AG04449 (cell line): ENCODE measurements at regions of chr11 and their contacts with region 1.

Region 1: DNA sequence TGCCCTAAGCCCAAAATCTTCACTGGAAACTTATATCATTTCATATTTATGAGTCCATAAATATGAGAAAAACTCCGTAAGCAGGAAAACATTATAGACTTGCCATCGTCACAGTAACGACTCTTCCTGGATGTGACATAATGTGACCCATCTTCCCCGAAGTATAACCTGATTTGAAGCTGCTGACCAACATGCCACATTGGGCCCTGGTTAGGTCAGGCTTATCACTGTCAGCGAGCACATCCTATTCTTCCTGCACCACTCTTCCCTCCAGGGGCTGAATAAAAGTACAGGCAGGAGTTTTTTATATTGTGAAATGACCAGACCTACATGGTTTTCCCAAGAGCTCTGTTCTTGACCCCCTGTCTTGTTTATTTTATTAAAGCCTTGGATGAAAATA is 12.1 kb upstream of the BLID start:
- DNase-seq: no peak
- H3K4me3 ChIP-seq: no peak overlapping the region
- CTCF ChIP-seq: no peak

Region 2: DNA sequence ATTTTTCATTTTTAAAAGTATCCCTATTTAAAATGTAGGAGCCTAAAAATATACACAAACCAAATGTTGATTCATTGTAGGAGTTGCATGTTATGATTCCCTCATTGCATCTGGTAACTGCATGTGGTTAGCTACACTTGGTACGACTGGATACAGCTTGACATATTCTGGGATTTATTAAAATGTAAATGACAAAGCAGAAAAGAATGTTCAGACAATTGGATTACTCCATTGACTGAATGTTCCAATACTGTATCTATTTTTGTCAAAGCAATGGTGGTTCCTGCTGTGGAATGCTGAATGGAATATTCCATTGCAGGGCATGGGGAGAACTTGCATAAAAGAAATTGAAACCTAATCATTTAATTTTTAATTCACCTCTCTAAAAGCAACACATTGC is 42.9 kb before region 1 on chr11:
- CTCF ChIA-PET with region 1: no interaction called
- POLR2A ChIA-PET with region 1: no interaction called
- DNase-seq: peak; percentile 81
- H3K4me3 ChIP-seq: no peak overlapping the region
- CTCF ChIP-seq: no peak

Region 3: GRCh38 chr11:122108192-122108799 is 19.9 kb before region 1 on chr11:
- CTCF ChIA-PET with region 1: interaction called, 10 read pairs
- POLR2A ChIA-PET with region 1: no interaction called
- DNase-seq: no peak
- H3K4me3 ChIP-seq: no peak overlapping the region
- CTCF ChIP-seq: peak; percentile 46

Region 4: GRCh38 chr11:122146475-122146874 is 18.3 kb after region 1 on chr11:
- CTCF ChIA-PET with region 1: no interaction called
- POLR2A ChIA-PET with region 1: no interaction called
- DNase-seq: no peak
- H3K4me3 ChIP-seq: no peak overlapping the region
- CTCF ChIP-seq: no peak

Region 5: GRCh38 chr11:122253589-122254231 is 125.6 kb after region 1 on chr11:
- CTCF ChIA-PET with region 1: no interaction called
- POLR2A ChIA-PET with region 1: no interaction called
- DNase-seq: no peak
- H3K4me3 ChIP-seq: no peak overlapping the region
- CTCF ChIP-seq: no peak